MCF 10A (cell line): ENCODE measurements at regions of chr3 and their contacts with region 1.

Region 1: GRCh38 chr3:15284121-15284889 is 48.1 kb downstream of the SH3BP5 start:
- DNase-seq: peak; percentile 57
- H3K4me3 Mint-ChIP-seq: no peak overlapping the region
- H3K27ac Mint-ChIP-seq: no peak overlapping the region
- H3K4me1 Mint-ChIP-seq: peaks cover 20% of the 10 kb centered on the region
- H3K27me3 Mint-ChIP-seq: no peaks in the 10 kb centered on the region
- CTCF ChIP-seq: no peak

Region 2: GRCh38 chr3:15319575-15319974 is 35.3 kb after region 1 on chr3:
- CTCF ChIA-PET with region 1: interaction called, 7 read pairs
- POLR2A ChIA-PET with region 1: interaction called, 16 read pairs
- intact Hi-C with region 1: no loop called
- DNase-seq: no peak
- H3K4me3 Mint-ChIP-seq: no peak overlapping the region
- H3K27ac Mint-ChIP-seq: no peak overlapping the region
- H3K4me1 Mint-ChIP-seq: peaks cover 18% of the 10 kb centered on the region
- H3K27me3 Mint-ChIP-seq: no peaks in the 10 kb centered on the region
- CTCF ChIP-seq: no peak